ENCODE measurements at regions of chr5 and their contacts with region 1.

Region 1: GRCh38 chr5:140073296-140073695 is 30.2 kb upstream of the NRG2 start:
- DNase-seq: no peak
- H3K4me3 ChIP-seq: no peak overlapping the region
- H3K27ac ChIP-seq: no peak overlapping the region
- H3K4me1 ChIP-seq: no peaks in the 10 kb centered on the region
- H3K27me3 ChIP-seq: no peaks in the 10 kb centered on the region
- CTCF ChIP-seq: peak; percentile 52 to 67 (median 60)

Region 2: DNA sequence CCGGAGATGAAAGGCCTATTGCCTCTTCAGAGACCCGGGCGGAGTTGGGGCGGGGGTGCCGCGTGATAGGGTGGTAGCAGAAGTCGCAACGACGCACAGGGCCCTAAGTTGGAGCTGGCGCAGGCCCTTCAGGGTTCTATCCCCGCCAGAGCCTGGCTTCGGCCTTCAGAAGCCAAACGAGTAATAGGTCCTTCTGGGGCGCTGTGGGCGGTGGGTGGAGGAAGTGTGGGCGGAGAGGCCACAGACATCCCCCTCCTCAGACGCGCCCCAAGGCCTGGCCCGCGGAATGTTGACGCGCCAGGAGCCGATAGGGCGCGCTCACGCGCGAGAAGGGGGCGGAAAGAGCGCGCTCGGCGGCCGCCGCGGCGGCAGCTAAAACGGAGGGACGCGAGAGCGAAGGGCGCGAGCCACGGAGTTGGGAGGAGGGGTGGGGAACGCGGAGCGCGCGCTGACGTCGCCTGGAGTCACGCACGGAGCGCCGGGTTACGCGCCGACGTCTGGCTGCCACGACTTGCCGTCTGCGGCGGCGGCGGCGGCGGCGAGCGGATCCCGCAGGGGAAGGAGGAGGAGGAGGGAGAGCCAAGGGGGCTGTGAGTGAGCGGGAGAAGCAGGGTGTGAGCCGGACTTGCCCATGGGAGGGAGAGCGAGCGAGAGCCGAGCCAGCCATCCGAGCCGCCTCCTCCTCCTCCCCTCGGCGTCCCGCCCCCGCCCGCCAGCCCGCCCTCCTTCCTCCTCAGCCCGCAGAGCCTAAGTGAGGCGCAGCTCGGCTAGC is 34.2 kb after region 1 on chr5:
- intact Hi-C with region 1: loop called (anchors 5 kb)
- DNase-seq: peak; percentile 46 to 94
- H3K4me3 ChIP-seq: peak overlapping the region; percentile 73 to 85
- H3K27ac ChIP-seq: peak overlapping the region; percentile 96 to 97
- H3K4me1 ChIP-seq: peaks cover 3 to 17% of the 10 kb centered on the region in 2 donors
- H3K27me3 ChIP-seq: no peaks in the 10 kb centered on the region
- CTCF ChIP-seq: peak in 2 of 3 experiments; percentile 25 to 37

Region 3: DNA sequence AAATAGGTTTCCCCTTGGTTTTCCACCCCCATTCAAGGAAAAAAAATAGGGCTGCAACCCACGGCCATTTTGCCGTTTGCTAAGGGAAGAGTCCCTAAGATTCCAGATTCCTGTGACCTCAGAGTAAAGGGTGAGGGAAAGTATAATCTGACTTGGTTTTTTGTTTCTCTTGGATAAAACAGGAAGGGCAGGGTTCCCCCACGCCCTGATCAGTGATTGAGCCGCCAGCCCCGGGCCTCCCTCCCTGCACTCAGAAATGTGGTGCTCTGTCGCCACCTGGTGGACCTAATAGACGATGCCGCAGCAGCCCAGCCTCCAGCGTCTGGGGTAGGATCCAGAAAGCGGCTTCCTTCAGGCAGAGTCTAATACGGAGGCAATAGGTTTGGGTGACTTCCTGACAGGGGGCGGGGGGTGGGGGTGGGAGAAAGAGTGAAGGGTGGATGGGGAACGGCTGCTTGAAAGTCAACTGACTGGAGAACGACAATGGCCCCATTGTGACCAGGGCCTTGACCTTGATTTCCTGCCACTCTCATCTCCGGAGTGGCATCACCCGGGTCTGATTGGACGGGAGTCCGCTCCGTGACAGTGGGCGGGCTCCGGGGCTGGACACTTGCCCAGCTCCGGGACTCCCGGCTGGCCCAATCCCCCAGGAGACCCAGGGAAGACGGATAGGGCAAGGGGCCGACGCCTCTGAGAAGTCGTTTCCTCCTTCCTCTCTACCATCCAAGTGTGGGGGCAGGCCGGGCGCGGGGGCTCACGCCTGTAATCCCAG is 83.9 kb after region 1 on chr5:
- intact Hi-C with region 1: loop called (anchors 1 kb)
- DNase-seq: peak; percentile 39 to 93
- H3K4me3 ChIP-seq: peak overlapping the region; percentile 47 to 51
- H3K27ac ChIP-seq: no peak overlapping the region
- H3K4me1 ChIP-seq: peaks cover 0 to 14% of the 10 kb centered on the region in 2 donors
- H3K27me3 ChIP-seq: peaks cover 3% of the 10 kb centered on the region
- CTCF ChIP-seq: peak; percentile 90 to 92 (median 91)